ENCODE measurements at regions of chr11 and their contacts with region 1.

Region 1: GRCh38 chr11:75280227-75280701 is 39.7 kb downstream of the TPBGL start:
- DNase-seq: peak; percentile 81
- ATAC-seq: peak; percentile 75 to 85

Region 2: DNA sequence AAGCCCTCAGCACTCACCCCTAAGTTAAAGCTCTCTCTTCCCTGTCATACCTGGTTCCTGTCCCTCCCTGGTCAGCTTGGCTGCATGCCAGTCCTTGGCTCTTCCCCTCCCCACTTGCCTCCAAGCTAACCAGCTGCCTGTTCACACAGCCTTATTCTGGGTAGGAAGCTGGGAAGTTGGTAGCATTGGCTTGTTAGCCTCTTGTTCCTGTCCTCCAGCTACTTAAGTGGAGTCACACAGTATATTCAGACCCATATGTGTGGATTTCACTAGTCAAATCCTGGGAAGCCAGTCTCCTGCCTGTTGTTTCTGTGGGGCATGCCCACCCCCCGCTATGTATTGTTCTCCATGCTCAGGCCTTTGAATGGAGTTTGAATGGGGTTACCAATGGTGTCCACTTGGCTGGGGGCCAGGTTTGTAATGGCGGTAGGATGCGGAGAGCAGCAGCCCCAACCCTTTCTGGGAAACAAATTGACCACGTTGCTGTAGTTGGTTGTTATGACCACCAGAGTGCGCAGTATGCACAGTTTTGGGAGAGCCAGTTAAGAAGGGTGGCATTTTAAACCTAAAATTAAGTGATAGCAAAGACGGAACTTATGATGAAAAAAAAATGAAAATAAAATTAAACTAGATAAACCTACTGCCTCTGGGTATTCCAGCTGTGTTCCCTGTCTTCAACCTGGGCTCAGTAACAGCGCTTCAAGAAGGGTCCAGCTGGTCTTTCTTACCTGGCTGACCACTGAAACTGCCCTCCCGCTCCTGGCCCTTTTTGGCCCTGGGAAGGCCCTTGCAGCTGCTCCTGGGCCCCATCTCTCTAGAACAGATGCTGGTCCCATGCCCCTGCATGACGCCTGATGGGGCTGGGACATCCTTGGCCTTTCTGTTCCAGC is 108.4 kb after region 1 on chr11:
- intact Hi-C with region 1: loop called (anchors 1 to 2 kb)
- DNase-seq: peak; percentile 73
- ATAC-seq: peak; percentile 60 to 74

Region 3: GRCh38 chr11:75428281-75428724 is 148.0 kb after region 1 on chr11:
- intact Hi-C with region 1: no loop called
- DNase-seq: peak; percentile 94
- ATAC-seq: peak; percentile 81 to 90